ENCODE measurements at regions of chr13 and their contacts with region 1.

Region 1: DNA sequence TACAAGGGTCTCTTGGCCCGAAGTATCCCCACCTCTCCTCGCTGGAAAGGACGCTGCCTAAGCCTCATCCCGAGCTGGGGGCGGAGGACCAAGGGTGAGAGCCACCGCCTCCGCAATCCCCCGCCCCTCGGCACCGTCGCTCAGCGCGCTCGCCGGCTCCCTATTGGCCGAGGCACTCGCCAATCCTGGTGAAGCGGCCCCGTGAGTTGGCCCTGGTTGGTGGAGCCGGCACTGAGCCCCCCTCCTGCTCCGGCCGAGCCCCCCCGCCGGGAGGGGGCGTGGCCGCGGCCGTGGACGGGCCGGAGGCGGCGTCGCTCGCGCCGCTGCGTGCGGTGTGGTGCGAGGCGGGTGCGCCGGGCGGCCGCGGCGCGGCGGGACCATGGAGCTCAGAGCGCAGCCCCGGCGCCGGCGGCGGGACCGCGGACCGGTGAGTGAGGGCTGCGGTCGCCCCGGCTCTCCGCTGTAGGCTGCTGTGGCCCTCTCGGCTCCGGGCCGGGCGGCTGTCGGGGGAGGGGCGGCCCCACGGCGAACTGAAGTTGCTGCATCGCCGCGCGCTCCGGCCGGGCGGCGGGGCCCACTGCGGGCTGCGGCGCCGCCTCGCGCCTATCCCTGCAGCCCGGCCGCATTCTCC is at the start of gene WASF3:
- DNase-seq: peak; percentile 93
- H3K4me3 Mint-ChIP-seq: peak within 1 kb of the TSS; percentile 79
- H3K27ac Mint-ChIP-seq: no peak within 1 kb of the TSS
- H3K4me1 Mint-ChIP-seq: peaks cover 15% of the 10 kb centered on the region
- H3K27me3 Mint-ChIP-seq: peaks cover 11% of the 10 kb centered on the region
- CTCF ChIP-seq: no peak
- total RNA-seq, gene WASF3: 21.8 and 24.0 TPM in 2 replicates

Region 2: GRCh38 chr13:26498656-26499591 is 58.6 kb before region 1 on chr13:
- CTCF ChIA-PET with region 1: interaction called, 3 read pairs
- POLR2A ChIA-PET with region 1: no interaction called
- intact Hi-C with region 1: loop called (anchors 5 kb)
- DNase-seq: no peak
- H3K4me3 Mint-ChIP-seq: no peak overlapping the region
- H3K27ac Mint-ChIP-seq: no peak overlapping the region
- H3K4me1 Mint-ChIP-seq: peaks cover 17% of the 10 kb centered on the region
- H3K27me3 Mint-ChIP-seq: no peaks in the 10 kb centered on the region
- CTCF ChIP-seq: no peak

Region 3: DNA sequence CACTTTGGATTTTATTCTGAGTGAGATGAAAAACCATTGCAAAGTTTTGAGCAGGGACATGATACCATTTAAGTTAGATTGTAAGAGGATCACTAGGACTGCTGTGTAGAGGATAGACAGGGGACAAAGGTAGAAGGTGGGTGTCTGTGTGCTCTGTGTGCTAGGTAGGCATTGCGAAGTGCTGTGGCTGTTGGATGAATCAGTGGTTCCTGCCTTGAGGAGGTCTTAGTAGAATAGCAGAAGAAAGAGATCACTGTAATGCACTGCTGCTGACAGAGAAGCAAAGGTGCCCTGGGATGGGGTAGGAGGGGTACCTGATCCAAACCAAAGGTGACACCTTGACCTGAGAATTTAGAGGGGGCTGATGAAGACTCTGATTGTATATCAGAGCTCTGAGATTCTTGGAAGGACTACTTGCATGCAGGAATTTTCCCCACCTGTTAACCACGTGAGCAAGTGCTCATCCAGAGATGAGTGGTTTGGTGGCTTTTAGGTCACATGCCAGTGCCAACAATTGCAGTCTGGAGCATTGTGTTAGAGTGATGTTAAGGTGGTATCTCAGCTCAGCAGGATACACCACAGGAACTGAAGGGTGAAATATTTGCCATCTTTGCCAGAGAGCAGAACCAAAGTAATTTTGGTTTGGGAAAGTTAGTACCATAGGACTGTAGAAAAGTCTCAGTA is 10.8 kb after region 1 on chr13:
- CTCF ChIA-PET with region 1: interaction called, 3 read pairs
- POLR2A ChIA-PET with region 1: interaction called, 10 read pairs
- intact Hi-C with region 1: no loop called
- DNase-seq: no peak
- H3K4me3 Mint-ChIP-seq: no peak overlapping the region
- H3K27ac Mint-ChIP-seq: no peak overlapping the region
- H3K4me1 Mint-ChIP-seq: peaks cover 19% of the 10 kb centered on the region
- H3K27me3 Mint-ChIP-seq: no peaks in the 10 kb centered on the region
- CTCF ChIP-seq: no peak

Region 4: GRCh38 chr13:26619358-26619757 is 61.9 kb after region 1 on chr13:
- CTCF ChIA-PET with region 1: no interaction called
- POLR2A ChIA-PET with region 1: interaction called, 6 read pairs
- intact Hi-C with region 1: loop called (anchors 10 kb)
- DNase-seq: no peak
- H3K4me3 Mint-ChIP-seq: no peak overlapping the region
- H3K27ac Mint-ChIP-seq: no peak overlapping the region
- H3K4me1 Mint-ChIP-seq: peaks cover 34% of the 10 kb centered on the region
- H3K27me3 Mint-ChIP-seq: no peaks in the 10 kb centered on the region
- CTCF ChIP-seq: no peak

Region 5: GRCh38 chr13:27461940-27462584 is 904.6 kb after region 1 on chr13:
- CTCF ChIA-PET with region 1: no interaction called
- POLR2A ChIA-PET with region 1: no interaction called
- intact Hi-C with region 1: no loop called
- DNase-seq: no peak
- H3K4me3 Mint-ChIP-seq: no peak overlapping the region
- H3K27ac Mint-ChIP-seq: no peak overlapping the region
- H3K4me1 Mint-ChIP-seq: peaks cover 6% of the 10 kb centered on the region
- H3K27me3 Mint-ChIP-seq: no peaks in the 10 kb centered on the region
- CTCF ChIP-seq: no peak